CD4-positive, alpha-beta memory T cell (primary cell): ENCODE measurements at regions of chr11 and their contacts with region 1.

Region 1: GRCh38 chr11:58567889-58568512 is 7.7 kb downstream of the LPXN start:
- DNase-seq: peak; percentile 72 to 79 (median 76)
- H3K4me3 ChIP-seq: no peak overlapping the region
- H3K4me3 Mint-ChIP-seq: peak overlapping the region; percentile 7 to 84 (median 66)
- H3K27ac ChIP-seq: no peak overlapping the region
- H3K27ac Mint-ChIP-seq: peak overlapping the region; percentile 64 to 93 (median 81)
- H3K4me1 ChIP-seq: peaks cover 76% of the 10 kb centered on the region
- H3K4me1 Mint-ChIP-seq: peaks cover 41 to 63% (median 52%) of the 10 kb centered on the region in 4 donors
- H3K27me3 ChIP-seq: no peaks in the 10 kb centered on the region
- H3K27me3 Mint-ChIP-seq: no peaks in the 10 kb centered on the region

Region 2: DNA sequence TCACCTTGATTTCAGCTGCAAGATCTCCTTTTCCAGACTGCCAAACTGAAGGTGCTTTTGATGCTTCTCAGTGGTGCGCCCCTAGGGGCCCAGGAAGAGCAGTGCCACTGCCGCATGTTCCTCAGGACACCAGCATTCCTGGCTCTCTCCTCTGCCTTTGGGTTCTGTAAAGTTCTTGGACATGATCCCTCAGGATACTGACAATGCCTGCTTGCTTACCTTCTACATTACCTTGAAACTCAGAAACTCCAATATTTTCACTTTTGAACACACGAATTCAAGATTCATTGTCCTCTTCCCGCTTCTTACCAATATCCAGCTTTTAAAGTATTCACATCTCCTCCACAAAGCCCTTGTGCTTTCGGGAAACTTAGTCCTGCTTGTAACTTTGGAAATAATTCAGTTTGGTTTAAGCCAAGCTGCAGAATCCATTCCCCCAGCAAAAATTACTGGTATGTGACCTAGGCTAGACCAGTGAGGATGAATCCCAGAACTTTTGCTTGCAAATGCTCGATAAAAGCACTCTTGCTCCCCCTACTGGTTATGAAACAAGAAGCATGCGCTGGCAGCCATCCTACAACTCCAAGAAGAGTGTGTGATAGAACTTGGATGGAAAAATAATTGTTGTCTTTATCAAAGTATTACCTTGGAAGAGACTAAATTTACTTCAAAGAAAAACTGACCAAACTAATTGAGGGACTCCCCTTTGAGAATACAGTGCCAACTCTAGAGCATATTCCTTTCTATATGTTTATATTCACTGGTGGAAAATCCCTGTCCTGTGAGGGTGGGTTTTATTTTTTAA is 43.6 kb before region 1 on chr11:
- CTCF ChIA-PET with region 1: interaction called, 19 read pairs
- POLR2A ChIA-PET with region 1: interaction called, 6 read pairs
- intact Hi-C with region 1: no loop called
- DNase-seq: peak; percentile 57 to 66 (median 63)
- H3K4me3 ChIP-seq: peak overlapping the region in 1 of 2 donors; percentile 22
- H3K4me3 Mint-ChIP-seq: peak overlapping the region; percentile 68 to 85 (median 76)
- H3K27ac ChIP-seq: peak overlapping the region; percentile 55
- H3K27ac Mint-ChIP-seq: peak overlapping the region; percentile 77 to 97 (median 94)
- H3K4me1 ChIP-seq: peaks cover 35% of the 10 kb centered on the region
- H3K4me1 Mint-ChIP-seq: peaks cover 31 to 54% (median 40%) of the 10 kb centered on the region in 4 donors
- H3K27me3 ChIP-seq: no peaks in the 10 kb centered on the region
- H3K27me3 Mint-ChIP-seq: no peaks in the 10 kb centered on the region

Region 3: DNA sequence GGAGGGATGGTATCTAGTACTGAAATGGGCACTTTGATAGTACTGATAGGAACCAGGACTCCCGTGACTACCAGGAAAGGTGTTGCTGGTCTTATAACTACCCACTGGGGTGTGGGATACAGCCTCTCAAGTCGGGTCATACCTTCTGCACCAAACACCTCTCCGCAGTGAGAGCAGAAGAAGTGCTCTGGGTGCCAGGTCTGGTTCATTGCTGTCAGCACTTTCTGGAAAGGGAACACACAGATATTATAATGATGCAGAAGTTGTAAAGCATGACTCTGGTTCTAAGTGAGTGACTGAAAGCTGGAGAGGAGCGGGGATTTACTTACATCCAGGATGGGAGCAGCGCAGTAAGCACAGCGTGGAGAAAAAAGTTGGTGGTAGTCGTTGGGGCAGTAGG is 18.4 kb before region 1 on chr11:
- CTCF ChIA-PET with region 1: interaction called, 33 read pairs
- POLR2A ChIA-PET with region 1: interaction called, 3 read pairs
- intact Hi-C with region 1: no loop called
- DNase-seq: no peak
- H3K4me3 ChIP-seq: no peak overlapping the region
- H3K4me3 Mint-ChIP-seq: no peak overlapping the region
- H3K27ac ChIP-seq: no peak overlapping the region
- H3K27ac Mint-ChIP-seq: peak overlapping the region in 2 of 7 donors; percentile 38 to 66
- H3K4me1 ChIP-seq: no peaks in the 10 kb centered on the region
- H3K4me1 Mint-ChIP-seq: peaks cover 5 to 35% (median 16%) of the 10 kb centered on the region in 4 donors
- H3K27me3 ChIP-seq: no peaks in the 10 kb centered on the region
- H3K27me3 Mint-ChIP-seq: no peaks in the 10 kb centered on the region

Region 4: GRCh38 chr11:58606930-58607714 is 39.1 kb after region 1 on chr11:
- CTCF ChIA-PET with region 1: interaction called, 22 read pairs
- POLR2A ChIA-PET with region 1: interaction called, 3 read pairs
- intact Hi-C with region 1: loop called (anchors 10 kb)
- DNase-seq: no peak
- H3K4me3 ChIP-seq: no peak overlapping the region
- H3K4me3 Mint-ChIP-seq: no peak overlapping the region
- H3K27ac ChIP-seq: no peak overlapping the region
- H3K27ac Mint-ChIP-seq: peak overlapping the region in 4 of 7 donors; percentile 19 to 71 (median 36)
- H3K4me1 ChIP-seq: peaks cover 25% of the 10 kb centered on the region
- H3K4me1 Mint-ChIP-seq: peaks cover 48 to 65% (median 55%) of the 10 kb centered on the region in 4 donors
- H3K27me3 ChIP-seq: no peaks in the 10 kb centered on the region
- H3K27me3 Mint-ChIP-seq: no peaks in the 10 kb centered on the region

Region 5: DNA sequence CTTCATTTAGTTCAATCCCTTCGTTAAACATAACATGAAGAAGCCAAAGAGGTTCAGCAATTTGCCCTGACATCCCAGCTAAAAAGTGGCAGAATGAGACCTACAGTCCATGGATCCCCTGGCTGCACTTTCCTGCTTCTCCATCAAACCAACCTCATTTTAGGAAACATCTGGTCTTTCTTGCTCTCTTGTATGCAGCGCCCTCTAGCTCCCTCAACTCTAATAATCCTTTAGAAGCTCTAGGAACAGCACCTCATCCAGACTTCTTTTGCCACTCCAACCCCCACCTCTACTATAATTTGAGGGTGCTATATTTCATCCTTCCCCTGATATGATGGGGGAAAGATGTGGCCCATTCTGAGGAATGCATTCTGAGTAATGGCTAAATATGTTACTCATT is 61.9 kb after region 1 on chr11:
- CTCF ChIA-PET with region 1: interaction called, 81 read pairs
- POLR2A ChIA-PET with region 1: no interaction called
- intact Hi-C with region 1: loop called (anchors 1 kb)
- DNase-seq: peak in 4 of 5 donors; percentile 12 to 34 (median 18)
- H3K4me3 ChIP-seq: no peak overlapping the region
- H3K4me3 Mint-ChIP-seq: no peak overlapping the region
- H3K27ac ChIP-seq: no peak overlapping the region
- H3K27ac Mint-ChIP-seq: peak overlapping the region in 2 of 7 donors; percentile 1 to 25
- H3K4me1 ChIP-seq: no peaks in the 10 kb centered on the region
- H3K4me1 Mint-ChIP-seq: peaks cover 0 to 4% (median 3%) of the 10 kb centered on the region in 4 donors
- H3K27me3 ChIP-seq: no peaks in the 10 kb centered on the region
- H3K27me3 Mint-ChIP-seq: no peaks in the 10 kb centered on the region